ENCODE measurements at regions of chr9 and their contacts with region 1.

Region 1: GRCh38 chr9:127396808-127397497 is at the start of gene SLC2A8:
- H3K4me3 ChIP-seq: peak within 1 kb of the TSS; percentile 57
- H3K27ac ChIP-seq: peak within 1 kb of the TSS; percentile 82
- H3K4me1 ChIP-seq: 0 out of 2 replicates have a peak, but pooled peaks cover 5% of the 10 kb centered on the region
- CTCF ChIP-seq: no peak

Region 2: GRCh38 chr9:127214421-127215267 is 182.3 kb before region 1 on chr9:
- CTCF ChIA-PET with region 1: interaction called, 13 read pairs
- POLR2A ChIA-PET with region 1: interaction called, 12 read pairs
- H3K4me3 ChIP-seq: no peak overlapping the region
- H3K27ac ChIP-seq: no peak overlapping the region
- H3K4me1 ChIP-seq: no peaks in the 10 kb centered on the region
- CTCF ChIP-seq: peak; percentile 32; the same call in 1 of the 2 replicates

Region 3: GRCh38 chr9:127244609-127245601 is 152.0 kb before region 1 on chr9:
- CTCF ChIA-PET with region 1: no interaction called
- POLR2A ChIA-PET with region 1: interaction called, 14 read pairs
- H3K4me3 ChIP-seq: peak overlapping the region; percentile 71
- H3K27ac ChIP-seq: no peak overlapping the region
- H3K4me1 ChIP-seq: no peaks in the 10 kb centered on the region
- CTCF ChIP-seq: no peak

Region 4: GRCh38 chr9:127360829-127361228 is 36.1 kb before region 1 on chr9:
- CTCF ChIA-PET with region 1: interaction called, 4 read pairs
- POLR2A ChIA-PET with region 1: interaction called, 12 read pairs
- H3K4me3 ChIP-seq: no peak overlapping the region
- H3K27ac ChIP-seq: no peak overlapping the region
- H3K4me1 ChIP-seq: no peaks in the 10 kb centered on the region
- CTCF ChIP-seq: peak; percentile 38; the same call in 1 of the 2 replicates

Region 5: DNA sequence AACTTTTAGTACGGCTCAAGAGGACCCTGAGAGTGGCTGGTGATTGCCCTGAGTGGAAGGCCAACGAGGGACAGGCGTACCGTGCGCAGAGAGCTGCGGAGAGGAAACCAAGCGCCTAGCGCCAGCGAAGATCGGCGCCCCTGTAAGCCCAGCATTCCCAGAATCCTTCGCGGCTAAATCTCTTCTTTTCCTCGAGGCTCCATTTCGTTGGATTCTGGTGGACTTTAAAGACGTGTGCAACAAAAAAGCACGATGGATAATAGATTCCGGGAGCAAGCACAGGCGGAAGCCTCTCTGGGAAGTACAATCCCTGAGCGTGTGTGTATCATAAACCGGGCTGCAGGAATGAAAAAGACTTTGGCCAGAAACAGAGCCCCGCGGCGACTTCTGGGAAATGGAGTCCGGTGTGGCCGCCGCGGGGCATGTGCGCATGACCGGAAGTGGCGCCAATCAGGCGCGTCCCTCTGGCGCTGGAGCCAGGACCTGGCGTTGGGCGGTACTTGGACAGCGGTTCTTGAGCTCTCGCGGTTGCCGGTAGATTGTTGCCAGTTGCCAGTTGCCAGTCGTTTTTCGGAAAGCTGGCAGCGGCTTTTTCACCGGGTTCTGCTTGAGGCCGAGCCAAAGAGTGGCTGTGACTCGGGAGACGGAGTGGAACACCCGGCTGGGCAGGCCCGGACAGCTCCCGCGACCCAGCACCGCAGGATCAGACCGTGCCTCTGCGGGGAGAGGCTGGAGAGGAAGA is 27.2 kb after region 1 on chr9 and contains the start of gene ZNF79:
- CTCF ChIA-PET with region 1: interaction called, 5 read pairs
- POLR2A ChIA-PET with region 1: interaction called, 42 read pairs
- H3K4me3 ChIP-seq: peak within 1 kb of the TSS; percentile 64
- H3K27ac ChIP-seq: peak within 1 kb of the TSS; percentile 80
- H3K4me1 ChIP-seq: 0 out of 2 replicates have a peak, but pooled peaks cover 5% of the 10 kb centered on the region
- CTCF ChIP-seq: no peak

Region 6: DNA sequence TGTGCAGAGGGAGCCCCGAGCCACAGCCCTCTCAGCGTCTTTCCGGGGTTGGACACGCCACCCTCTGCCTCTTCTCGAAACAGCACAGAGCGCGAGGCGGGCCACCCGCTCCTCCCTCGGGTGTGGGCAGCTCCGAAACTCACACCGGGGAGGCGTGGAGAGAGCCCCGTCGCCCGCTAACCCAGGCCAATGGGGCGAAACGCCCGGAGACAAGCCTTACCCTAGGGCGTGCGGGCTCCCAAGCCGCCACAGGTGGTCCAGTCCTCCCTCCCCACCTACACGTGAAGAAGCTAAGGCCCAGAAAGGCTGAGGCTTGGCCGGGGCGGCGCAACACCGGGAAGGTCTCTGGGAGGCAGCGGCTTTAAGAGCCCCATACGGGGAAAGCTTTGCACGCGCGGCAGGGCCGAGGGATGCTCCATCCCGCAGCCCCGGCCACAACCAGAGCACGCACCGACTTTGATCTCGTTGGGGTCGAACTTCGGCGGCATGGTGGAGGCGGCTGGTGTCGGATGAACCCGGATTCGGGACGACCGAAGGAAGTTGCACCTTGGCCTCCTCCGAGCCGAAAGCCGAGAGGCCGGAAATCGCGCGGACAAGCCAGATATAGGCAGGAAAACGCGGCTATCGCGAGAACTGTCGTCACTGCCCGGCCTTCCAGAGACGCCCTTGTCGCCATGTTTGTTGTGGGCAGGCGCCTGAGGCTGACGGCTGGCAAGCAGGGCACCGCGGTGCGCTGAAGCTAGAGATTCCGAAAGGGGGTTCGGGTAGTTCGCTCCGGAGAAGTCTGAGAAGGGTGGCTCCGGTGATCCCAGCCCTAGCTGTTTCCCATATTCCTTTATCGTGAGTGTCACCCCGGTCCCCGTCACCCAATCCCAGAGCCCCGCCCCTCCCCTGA is 54.1 kb after region 1 on chr9 and contains the starts of genes LRSAM1 and RPL12:
- CTCF ChIA-PET with region 1: interaction called, 3 read pairs
- POLR2A ChIA-PET with region 1: interaction called, 38 read pairs
- H3K4me3 ChIP-seq: peak within 1 kb of the TSS; percentile 90
- H3K27ac ChIP-seq: peak within 1 kb of the TSS; percentile 98
- H3K4me1 ChIP-seq: no peaks in the 10 kb centered on the region
- CTCF ChIP-seq: no peak

Measured in HEK293 (cell line).